GM12878 (cell line): ENCODE measurements at regions of chr3 and their contacts with region 1.

Region 1: GRCh38 chr3:20039766-20040475 is at the start of gene KAT2B:
- DNase-seq: no peak
- ATAC-seq: peak; percentile 79
- H3K4me3 ChIP-seq: peak within 1 kb of the TSS; percentile 72
- H3K27ac ChIP-seq: peak within 1 kb of the TSS; percentile 79
- H3K4me1 ChIP-seq: peaks cover 10% of the 10 kb centered on the region
- H3K27me3 ChIP-seq: no peaks in the 10 kb centered on the region
- CTCF ChIP-seq: peak; percentile 42 to 78 (median 66)
- EP300 ChIP-seq: no peak
- POLR2A ChIP-seq: peak; percentile 81
- RAD21 ChIP-seq: peak; percentile 46; the same call in 1 of the 2 replicates
- polyA plus RNA-seq, gene KAT2B: 2.9 to 4.3 TPM

Region 2: DNA sequence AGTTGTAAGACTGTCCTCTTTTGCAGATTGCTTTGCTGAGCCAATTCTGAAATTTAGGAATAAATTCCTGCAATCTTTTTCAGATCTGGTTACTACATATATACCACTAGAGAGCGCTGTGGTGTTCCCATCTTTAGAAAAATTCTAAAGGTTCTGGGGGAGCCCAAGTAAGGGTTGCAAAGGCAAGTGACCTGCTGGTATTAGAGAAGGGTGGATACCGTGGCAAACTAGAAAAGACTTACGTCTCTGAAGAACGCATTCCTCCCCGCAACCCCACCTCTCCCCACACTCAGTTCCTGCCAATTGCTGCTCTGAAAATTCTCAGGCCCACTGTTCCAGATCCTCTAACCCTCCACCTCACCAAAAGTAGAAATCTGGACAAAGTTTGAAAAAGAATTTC is 154.5 kb before region 1 on chr3:
- CTCF ChIA-PET with region 1: interaction called, 3 read pairs
- POLR2A ChIA-PET with region 1: no interaction called
- RAD21 ChIA-PET with region 1: interaction called, 3 read pairs
- SMC1A ChIA-PET with region 1: interaction called, 5 read pairs
- in situ Hi-C with region 1: no loop called
- intact Hi-C with region 1: loop called (anchors 5 kb)
- DNase-seq: no peak
- ATAC-seq: peak; percentile 82
- H3K4me3 ChIP-seq: no peak overlapping the region
- H3K27ac ChIP-seq: no peak overlapping the region
- H3K4me1 ChIP-seq: no peaks in the 10 kb centered on the region
- H3K27me3 ChIP-seq: no peaks in the 10 kb centered on the region
- CTCF ChIP-seq: peak; percentile 27 to 59 (median 48); a peak in 5 of 6 replicates
- EP300 ChIP-seq: no peak
- POLR2A ChIP-seq: no peak
- RAD21 ChIP-seq: peak; percentile 76

Region 3: DNA sequence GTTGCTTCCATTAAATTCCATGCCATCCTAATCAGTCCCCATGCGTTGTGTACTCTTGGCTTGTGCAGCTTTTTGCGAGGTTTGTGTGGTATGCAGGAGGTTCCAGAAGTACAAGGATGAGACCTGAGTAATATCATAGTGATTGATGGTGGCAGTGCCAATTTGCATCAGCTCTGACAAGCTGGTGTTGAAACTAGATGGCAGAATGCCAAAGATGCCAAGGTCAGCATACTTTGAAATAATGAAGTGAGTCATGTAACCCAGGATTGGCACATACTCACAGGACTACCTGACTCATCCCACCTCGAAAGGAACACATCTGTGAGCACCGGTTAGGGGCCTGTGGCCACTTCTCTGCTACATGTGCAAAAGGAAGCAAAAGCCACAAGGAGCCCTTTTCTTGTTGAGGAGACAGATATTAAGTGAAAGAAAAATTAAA is 14.6 kb after region 1 on chr3:
- CTCF ChIA-PET with region 1: interaction called, 3 read pairs
- POLR2A ChIA-PET with region 1: interaction called, 9 read pairs
- RAD21 ChIA-PET with region 1: interaction called, 35 read pairs
- SMC1A ChIA-PET with region 1: interaction called, 14 read pairs
- in situ Hi-C with region 1: no loop called
- intact Hi-C with region 1: no loop called
- DNase-seq: peak; percentile 82
- ATAC-seq: peak; percentile 90
- H3K4me3 ChIP-seq: no peak overlapping the region
- H3K27ac ChIP-seq: no peak overlapping the region
- H3K4me1 ChIP-seq: peaks cover 21% of the 10 kb centered on the region
- H3K27me3 ChIP-seq: no peaks in the 10 kb centered on the region
- CTCF ChIP-seq: no peak
- EP300 ChIP-seq: no peak
- POLR2A ChIP-seq: no peak
- RAD21 ChIP-seq: no peak

Region 4: DNA sequence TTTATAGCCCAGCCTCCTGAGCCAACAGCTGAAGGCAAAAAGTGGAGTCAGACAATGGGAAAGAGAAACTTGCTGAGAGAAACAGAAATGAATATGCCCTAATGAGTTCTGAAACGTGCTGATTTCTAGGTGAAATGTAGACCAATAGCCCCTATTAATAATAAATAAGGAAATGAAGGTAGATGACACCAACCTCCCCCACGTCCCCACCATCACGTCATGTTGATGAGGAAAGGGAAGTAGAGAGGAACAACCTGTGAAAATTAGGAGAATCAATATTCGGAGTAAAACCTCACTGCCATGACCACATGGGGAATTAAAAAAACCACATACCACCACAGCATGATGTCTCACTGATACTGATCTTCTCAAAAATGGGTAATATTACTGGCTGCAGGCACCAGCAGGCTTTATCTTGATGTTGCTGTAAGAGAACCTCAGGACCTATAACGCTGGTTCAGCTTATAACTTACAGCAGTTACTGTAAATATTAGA is 64.3 kb after region 1 on chr3:
- CTCF ChIA-PET with region 1: interaction called, 6 read pairs
- POLR2A ChIA-PET with region 1: no interaction called
- RAD21 ChIA-PET with region 1: interaction called, 11 read pairs
- SMC1A ChIA-PET with region 1: interaction called, 12 read pairs
- in situ Hi-C with region 1: no loop called
- intact Hi-C with region 1: no loop called
- DNase-seq: peak; percentile 13
- ATAC-seq: peak; percentile 91
- H3K4me3 ChIP-seq: 0 out of 2 replicates have a peak overlapping the region, but pooled peaks have one; percentile 36
- H3K27ac ChIP-seq: no peak overlapping the region
- H3K4me1 ChIP-seq: peaks cover 16% of the 10 kb centered on the region
- H3K27me3 ChIP-seq: no peaks in the 10 kb centered on the region
- CTCF ChIP-seq: no peak
- EP300 ChIP-seq: peak in 1 of 2 experiments; percentile 42; a peak in 1 of 4 replicates
- POLR2A ChIP-seq: no peak
- RAD21 ChIP-seq: no peak

Region 5: DNA sequence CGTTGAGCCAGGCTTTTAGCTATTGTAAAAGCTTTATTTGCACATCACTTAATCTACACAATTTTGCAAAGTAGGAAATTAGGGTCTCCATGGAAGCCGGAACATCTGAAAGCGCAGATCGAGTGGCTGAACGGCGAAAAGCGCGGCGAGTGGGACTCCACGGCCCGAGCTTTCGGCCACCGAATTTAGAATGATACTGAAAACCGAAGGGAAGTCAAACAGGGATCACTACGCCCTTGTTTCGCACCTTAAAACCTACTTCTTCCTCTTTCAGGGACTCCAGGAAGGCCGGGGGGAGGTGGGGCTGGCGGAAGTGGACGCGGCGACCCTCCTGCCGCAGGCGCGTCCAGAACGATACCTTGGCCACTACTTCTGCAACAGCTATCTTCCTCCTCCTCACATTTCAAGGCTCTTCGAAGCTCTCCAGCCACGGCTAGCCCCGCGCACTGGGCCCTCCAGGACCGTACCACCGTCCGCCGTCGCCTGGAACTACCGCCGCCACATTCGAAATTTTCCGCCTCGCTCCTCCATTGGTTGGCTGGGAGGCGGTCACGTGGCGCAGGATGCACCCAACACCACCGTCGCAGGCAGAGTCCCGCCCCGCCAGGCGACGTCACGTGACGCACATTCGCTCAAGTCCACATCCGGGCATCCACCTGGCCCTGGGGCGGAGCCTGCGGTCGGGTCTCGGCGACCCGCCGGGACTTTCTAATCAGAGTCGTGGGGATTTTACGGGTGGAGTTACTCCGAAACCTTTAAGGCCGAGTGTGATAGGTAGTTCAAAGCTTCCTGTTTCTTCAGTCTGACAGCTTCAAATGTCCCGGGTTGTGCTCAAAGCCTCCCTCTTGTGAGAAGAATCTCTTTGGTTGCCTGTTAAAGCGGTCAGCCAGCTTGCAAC is 146.0 kb after region 1 on chr3 and contains the start of gene SGO1:
- CTCF ChIA-PET with region 1: interaction called, 3 read pairs
- POLR2A ChIA-PET with region 1: interaction called, 48 read pairs
- RAD21 ChIA-PET with region 1: interaction called, 28 read pairs
- SMC1A ChIA-PET with region 1: interaction called, 9 read pairs
- in situ Hi-C with region 1: loop called (anchors 10 kb)
- intact Hi-C with region 1: loop called (anchors 1 kb)
- DNase-seq: peak; percentile 97
- ATAC-seq: peak; percentile 90
- H3K4me3 ChIP-seq: peak within 1 kb of the TSS; percentile 80
- H3K27ac ChIP-seq: peak within 1 kb of the TSS; percentile 89
- H3K4me1 ChIP-seq: no peaks in the 10 kb centered on the region
- H3K27me3 ChIP-seq: no peaks in the 10 kb centered on the region
- CTCF ChIP-seq: no peak
- EP300 ChIP-seq: peak in 1 of 2 experiments; percentile 17; a peak in 1 of 4 replicates
- POLR2A ChIP-seq: peak; percentile 93
- RAD21 ChIP-seq: peak; percentile 29; the same call in 1 of the 2 replicates
- polyA plus RNA-seq, gene SGO1: 12.3 to 14.0 TPM

Region 6: GRCh38 chr3:20222274-20222673 is 182.4 kb after region 1 on chr3:
- CTCF ChIA-PET with region 1: no interaction called
- POLR2A ChIA-PET with region 1: no interaction called
- RAD21 ChIA-PET with region 1: no interaction called
- SMC1A ChIA-PET with region 1: no interaction called
- in situ Hi-C with region 1: no loop called
- intact Hi-C with region 1: no loop called
- DNase-seq: no peak
- ATAC-seq: no peak
- H3K4me3 ChIP-seq: no peak overlapping the region
- H3K27ac ChIP-seq: no peak overlapping the region
- H3K4me1 ChIP-seq: no peaks in the 10 kb centered on the region
- H3K27me3 ChIP-seq: no peaks in the 10 kb centered on the region
- CTCF ChIP-seq: no peak
- EP300 ChIP-seq: no peak
- POLR2A ChIP-seq: no peak
- RAD21 ChIP-seq: no peak

Region 7: DNA sequence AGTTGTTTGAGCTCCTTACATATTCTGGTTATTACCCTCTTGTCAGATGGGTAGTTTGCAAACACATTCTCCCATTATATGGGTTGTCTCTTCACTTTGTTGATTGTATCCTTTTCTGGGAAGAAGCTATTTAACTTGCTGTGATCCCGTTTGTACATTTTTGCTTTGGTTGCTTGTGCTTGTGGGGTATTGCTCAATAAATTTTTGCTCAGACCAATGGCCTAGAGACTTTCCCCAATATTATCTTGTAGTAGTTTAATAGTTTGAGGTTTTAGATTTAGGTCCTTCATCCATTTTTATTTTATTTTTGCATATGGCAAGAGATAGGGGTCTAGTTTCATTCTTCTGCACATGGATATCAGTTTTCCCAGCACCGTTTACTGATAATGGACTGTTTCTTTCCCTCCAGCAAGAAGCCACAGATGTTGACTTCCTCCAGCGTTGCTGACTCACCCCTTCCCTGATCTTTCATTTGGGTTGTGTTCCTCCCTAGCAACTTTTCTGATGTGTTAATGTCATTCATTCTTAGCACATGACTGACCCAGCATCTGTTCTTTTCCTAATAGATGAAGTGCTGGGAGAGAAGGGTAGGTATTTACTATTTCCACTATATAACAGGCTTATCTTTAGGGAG is 312.7 kb after region 1 on chr3:
- CTCF ChIA-PET with region 1: no interaction called
- POLR2A ChIA-PET with region 1: no interaction called
- RAD21 ChIA-PET with region 1: no interaction called
- SMC1A ChIA-PET with region 1: no interaction called
- in situ Hi-C with region 1: no loop called
- intact Hi-C with region 1: no loop called
- DNase-seq: no peak
- ATAC-seq: no peak
- H3K4me3 ChIP-seq: no peak overlapping the region
- H3K27ac ChIP-seq: no peak overlapping the region
- H3K4me1 ChIP-seq: no peaks in the 10 kb centered on the region
- H3K27me3 ChIP-seq: no peaks in the 10 kb centered on the region
- CTCF ChIP-seq: no peak
- EP300 ChIP-seq: no peak
- POLR2A ChIP-seq: no peak
- RAD21 ChIP-seq: no peak